ENCODE measurements at regions of chr18 and their contacts with region 1.

Region 1: DNA sequence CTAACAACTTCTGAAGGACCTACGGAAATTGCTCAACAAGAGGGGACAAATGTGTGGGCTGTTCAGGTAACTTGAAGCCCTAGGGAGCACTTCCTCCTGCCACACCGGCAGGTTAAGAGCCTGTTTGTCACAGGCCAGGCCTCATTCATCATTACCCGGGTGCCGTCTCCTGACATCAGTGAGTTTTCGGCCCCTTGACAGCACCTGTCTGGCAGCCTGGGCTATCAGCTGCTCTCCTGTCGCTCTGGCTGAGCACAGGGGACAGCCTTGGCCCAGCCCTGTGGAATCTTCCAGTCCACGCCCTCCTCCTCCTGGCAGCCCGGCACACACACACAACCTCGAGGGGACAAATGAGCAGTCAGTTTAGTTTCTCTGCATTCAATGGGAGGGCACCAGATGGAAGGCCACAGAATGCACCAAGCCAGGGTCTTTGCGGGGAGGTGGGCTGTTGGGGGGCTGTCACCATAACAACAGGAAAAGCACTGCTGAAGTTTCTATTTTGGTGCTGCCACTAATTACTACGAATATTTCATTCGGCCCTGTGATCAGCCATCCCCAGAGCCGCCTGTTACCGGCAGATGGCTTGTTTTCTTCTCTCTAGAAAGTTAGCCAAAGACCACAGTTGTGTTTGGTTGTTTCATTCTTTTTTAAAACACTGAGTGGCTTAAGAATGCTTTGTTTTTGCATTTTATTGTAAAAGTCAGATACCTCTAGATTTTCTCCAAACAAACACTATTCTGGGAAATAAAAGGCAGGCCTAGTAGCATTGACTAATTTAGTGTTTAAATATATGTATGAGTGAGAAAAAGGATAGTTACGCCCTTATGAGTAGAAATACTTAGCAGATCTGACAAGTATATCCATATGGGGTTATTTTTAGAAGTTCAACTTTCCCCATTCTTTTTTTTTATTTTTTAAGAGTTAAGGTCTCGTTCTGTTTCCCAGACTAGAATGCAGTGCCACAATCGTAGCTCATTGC is 189.9 kb upstream of the NDUFV2 start:
- DNase-seq: peak; percentile 98
- H3K4me3 ChIP-seq: peak overlapping the region; percentile 49
- H3K27ac ChIP-seq: peak overlapping the region; percentile 98
- H3K4me1 ChIP-seq: peaks cover 52% of the 10 kb centered on the region
- CTCF ChIP-seq: peak; percentile 36; the same call in 1 of the 2 replicates

Region 2: GRCh38 chr18:8661754-8662569 is 250.7 kb before region 1 on chr18:
- CTCF ChIA-PET with region 1: no interaction called
- POLR2A ChIA-PET with region 1: interaction called, 4 read pairs
- intact Hi-C with region 1: loop called (anchors 5 kb)
- DNase-seq: peak; percentile 48
- H3K4me3 ChIP-seq: peak overlapping the region; percentile 30
- H3K27ac ChIP-seq: no peak overlapping the region
- H3K4me1 ChIP-seq: peaks cover 18% of the 10 kb centered on the region
- CTCF ChIP-seq: no peak

Region 3: GRCh38 chr18:8704361-8705279 is 208.0 kb before region 1 on chr18:
- CTCF ChIA-PET with region 1: no interaction called
- POLR2A ChIA-PET with region 1: interaction called, 7 read pairs
- intact Hi-C with region 1: loop called (anchors 2 kb)
- DNase-seq: peak; percentile 91
- H3K4me3 ChIP-seq: peak overlapping the region; percentile 67
- H3K27ac ChIP-seq: no peak overlapping the region
- H3K4me1 ChIP-seq: peaks cover 24% of the 10 kb centered on the region
- CTCF ChIP-seq: no peak

Region 4: GRCh38 chr18:8951491-8951890 is 38.9 kb after region 1 on chr18:
- CTCF ChIA-PET with region 1: interaction called, 3 read pairs
- POLR2A ChIA-PET with region 1: interaction called, 8 read pairs
- intact Hi-C with region 1: loop called (anchors 1 kb)
- DNase-seq: peak; percentile 96
- H3K4me3 ChIP-seq: peak overlapping the region; percentile 38
- H3K27ac ChIP-seq: peak overlapping the region; percentile 91
- H3K4me1 ChIP-seq: peaks cover 72% of the 10 kb centered on the region
- CTCF ChIP-seq: no peak

Region 5: GRCh38 chr18:9066817-9067306 is 154.2 kb after region 1 on chr18:
- CTCF ChIA-PET with region 1: no interaction called
- POLR2A ChIA-PET with region 1: interaction called, 3 read pairs
- intact Hi-C with region 1: loop called (anchors 5 kb)
- DNase-seq: peak; percentile 87
- H3K4me3 ChIP-seq: peak overlapping the region; percentile 30
- H3K27ac ChIP-seq: peak overlapping the region; percentile 94
- H3K4me1 ChIP-seq: peaks cover 86% of the 10 kb centered on the region
- CTCF ChIP-seq: no peak

Region 6: GRCh38 chr18:9334329-9334972 is 421.8 kb after region 1 on chr18 and contains the start of gene TWSG1:
- CTCF ChIA-PET with region 1: no interaction called
- POLR2A ChIA-PET with region 1: no interaction called
- intact Hi-C with region 1: no loop called
- DNase-seq: peak; percentile 96
- H3K4me3 ChIP-seq: peak within 1 kb of the TSS; percentile 96
- H3K27ac ChIP-seq: no peak within 1 kb of the TSS
- H3K4me1 ChIP-seq: peaks cover 8% of the 10 kb centered on the region
- CTCF ChIP-seq: peak; percentile 32; the same call in 1 of the 2 replicates
- total RNA-seq, gene TWSG1: 7.4 and 7.5 TPM in 2 replicates

Measured in OCI-LY7 (cell line).